MCF 10A (cell line): ENCODE measurements at regions of chr6 and their contacts with region 1.

Region 1: GRCh38 chr6:217048-217659 is 75.1 kb upstream of the DUSP22 start:
- DNase-seq: peak; percentile 28
- H3K4me3 Mint-ChIP-seq: no peak overlapping the region
- H3K27ac Mint-ChIP-seq: no peak overlapping the region
- H3K4me1 Mint-ChIP-seq: peaks cover 36% of the 10 kb centered on the region
- H3K27me3 Mint-ChIP-seq: no peaks in the 10 kb centered on the region
- CTCF ChIP-seq: peak; percentile 46

Region 2: DNA sequence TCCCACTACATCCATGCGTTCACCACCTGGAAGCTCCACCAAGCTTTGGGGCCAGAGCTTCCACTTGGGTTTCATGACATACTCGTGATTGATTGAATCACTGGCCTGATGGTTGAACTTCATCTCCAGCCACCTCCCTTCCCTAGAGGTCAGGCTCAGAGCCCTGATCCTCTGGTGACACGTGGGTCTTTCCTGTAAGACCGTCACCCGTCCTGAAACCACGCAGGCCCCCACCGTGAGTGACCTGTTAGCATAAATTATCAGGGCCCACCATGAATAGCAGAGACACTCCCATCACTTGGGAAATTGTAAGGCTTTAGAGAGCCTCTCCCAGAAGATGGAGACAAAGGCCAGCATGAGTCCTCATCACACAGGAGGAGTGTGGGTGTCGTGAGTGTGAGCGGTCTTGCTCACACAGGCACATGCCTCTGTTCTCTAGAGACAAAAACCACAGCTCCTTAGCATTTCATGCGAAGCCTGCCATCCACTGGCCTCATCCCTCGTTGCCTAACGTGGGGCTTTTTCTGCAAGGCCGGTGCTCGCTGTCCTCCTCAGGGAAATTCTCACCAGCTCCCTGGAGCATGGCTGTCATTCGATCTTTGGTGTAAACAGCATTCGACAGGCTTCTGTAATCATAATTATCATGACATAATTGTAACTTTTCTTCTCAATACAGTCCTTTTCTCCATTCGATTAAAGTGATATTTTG is 10.1 kb after region 1 on chr6:
- CTCF ChIA-PET with region 1: interaction called, 5 read pairs
- POLR2A ChIA-PET with region 1: interaction called, 37 read pairs
- intact Hi-C with region 1: no loop called
- DNase-seq: no peak
- H3K4me3 Mint-ChIP-seq: no peak overlapping the region
- H3K27ac Mint-ChIP-seq: no peak overlapping the region
- H3K4me1 Mint-ChIP-seq: peaks cover 22% of the 10 kb centered on the region
- H3K27me3 Mint-ChIP-seq: no peaks in the 10 kb centered on the region
- CTCF ChIP-seq: no peak

Region 3: GRCh38 chr6:328136-328670 is 111.0 kb after region 1 on chr6:
- CTCF ChIA-PET with region 1: no interaction called
- POLR2A ChIA-PET with region 1: interaction called, 11 read pairs
- intact Hi-C with region 1: no loop called
- DNase-seq: peak; percentile 93
- H3K4me3 Mint-ChIP-seq: no peak overlapping the region
- H3K27ac Mint-ChIP-seq: no peak overlapping the region
- H3K4me1 Mint-ChIP-seq: no peaks in the 10 kb centered on the region
- H3K27me3 Mint-ChIP-seq: no peaks in the 10 kb centered on the region
- CTCF ChIP-seq: no peak